AG04449 (cell line): ENCODE measurements at regions of chr4 and their contacts with region 1.

Region 1: GRCh38 chr4:184263910-184264732 is 46.4 kb upstream of the ENPP6 start:
- DNase-seq: peak; percentile 33
- H3K4me3 ChIP-seq: no peak overlapping the region
- CTCF ChIP-seq: peak; percentile 77

Region 2: DNA sequence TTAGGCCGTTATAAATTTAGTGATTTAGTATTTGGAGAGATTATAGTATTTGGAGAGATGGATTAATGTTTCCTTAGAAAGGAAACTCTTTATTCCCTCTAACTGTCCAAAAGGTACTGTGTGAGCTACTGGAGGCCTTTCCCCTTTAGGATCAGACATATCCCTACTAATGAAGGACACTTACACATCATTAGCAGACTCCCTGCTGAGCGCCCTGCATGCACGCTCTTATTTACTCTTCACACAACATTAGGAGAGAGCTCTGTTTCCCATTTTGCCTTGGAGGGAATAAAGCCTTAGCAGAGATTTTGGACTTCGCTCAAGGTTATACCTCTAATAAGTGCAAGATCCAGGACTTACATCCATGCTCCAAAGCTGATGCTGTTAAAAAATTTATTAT is 376.8 kb before region 1 on chr4:
- CTCF ChIA-PET with region 1: no interaction called
- POLR2A ChIA-PET with region 1: no interaction called
- DNase-seq: no peak
- H3K4me3 ChIP-seq: no peak overlapping the region
- CTCF ChIP-seq: no peak

Region 3: DNA sequence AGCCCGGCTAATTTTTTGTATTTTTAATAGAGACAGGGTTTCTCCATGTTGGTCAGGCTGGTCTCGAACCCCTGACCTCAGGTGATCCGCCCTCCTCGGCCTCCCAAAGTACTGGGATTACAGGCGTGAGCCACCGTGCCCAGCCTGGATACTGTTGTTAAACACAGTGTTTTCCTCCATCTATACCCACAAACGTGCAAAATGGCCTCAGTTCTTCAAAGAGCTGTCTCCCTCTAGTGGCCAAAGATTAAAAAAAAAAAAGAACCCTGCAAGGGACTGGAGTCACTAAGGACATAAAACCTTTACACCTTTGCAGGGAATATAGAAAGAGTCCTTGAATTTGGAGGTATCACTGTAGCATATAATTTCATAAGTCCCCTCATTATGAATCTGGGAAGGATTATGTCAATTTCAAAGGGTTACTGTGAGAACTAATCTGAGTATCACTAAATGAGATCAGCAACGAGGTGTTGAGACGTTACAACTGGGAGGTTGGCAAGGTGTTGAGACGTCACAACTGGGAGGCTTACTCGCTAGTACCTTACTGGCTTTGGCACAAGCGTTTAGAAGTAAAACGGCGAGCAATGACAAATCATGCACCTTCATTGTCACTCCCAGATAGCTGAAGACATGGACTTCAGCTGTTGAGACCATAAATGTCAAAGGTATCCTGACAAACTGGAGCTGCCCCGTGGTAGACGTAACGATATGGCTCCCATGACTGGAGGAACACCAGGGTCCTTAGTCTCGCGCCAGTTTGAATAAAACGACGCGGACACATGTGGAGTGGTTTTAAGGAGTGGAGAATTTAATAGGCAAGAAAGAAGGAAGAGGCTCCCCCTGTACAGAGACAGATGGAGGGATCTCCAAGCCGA is 13.1 kb before region 1 on chr4:
- CTCF ChIA-PET with region 1: interaction called, 84 read pairs
- POLR2A ChIA-PET with region 1: no interaction called
- DNase-seq: no peak
- H3K4me3 ChIP-seq: no peak overlapping the region
- CTCF ChIP-seq: peak; percentile 22

Region 4: GRCh38 chr4:184287697-184288255 is 23.7 kb after region 1 on chr4:
- CTCF ChIA-PET with region 1: interaction called, 27 read pairs
- POLR2A ChIA-PET with region 1: no interaction called
- DNase-seq: no peak
- H3K4me3 ChIP-seq: no peak overlapping the region
- CTCF ChIP-seq: peak; percentile 18

Region 5: GRCh38 chr4:184514121-184514988 is 250.2 kb after region 1 on chr4:
- CTCF ChIA-PET with region 1: interaction called, 17 read pairs
- POLR2A ChIA-PET with region 1: interaction called, 3 read pairs
- DNase-seq: peak; percentile 69
- H3K4me3 ChIP-seq: peak overlapping the region; percentile 48
- CTCF ChIP-seq: no peak

Region 6: GRCh38 chr4:184649026-184649970 is 385.2 kb after region 1 on chr4 and contains the starts of genes CASP3 and PRIMPOL:
- CTCF ChIA-PET with region 1: interaction called, 12 read pairs
- POLR2A ChIA-PET with region 1: interaction called, 4 read pairs
- DNase-seq: peak; percentile 51
- H3K4me3 ChIP-seq: peak within 1 kb of the TSS; percentile 79
- CTCF ChIP-seq: peak; percentile 53